Panc1 (cell line): ENCODE measurements at regions of chr2 and their contacts with region 1.

Region 1: GRCh38 chr2:236538242-236538641 is 31.4 kb upstream of the ACKR3 start:
- DNase-seq: no peak
- ATAC-seq: no peak
- H3K4me3 ChIP-seq: no peak overlapping the region
- H3K27ac ChIP-seq: no peak overlapping the region
- H3K4me1 ChIP-seq: no peaks in the 10 kb centered on the region
- H3K27me3 ChIP-seq: peaks cover 3% of the 10 kb centered on the region
- CTCF ChIP-seq: no peak

Region 2: GRCh38 chr2:236554627-236555282 is 16.5 kb after region 1 on chr2:
- CTCF ChIA-PET with region 1: no interaction called
- POLR2A ChIA-PET with region 1: no interaction called
- in situ Hi-C with region 1: no loop called
- intact Hi-C with region 1: loop called (anchors 2 kb)
- DNase-seq: no peak
- ATAC-seq: no peak
- H3K4me3 ChIP-seq: no peak overlapping the region
- H3K27ac ChIP-seq: no peak overlapping the region
- H3K4me1 ChIP-seq: no peaks in the 10 kb centered on the region
- H3K27me3 ChIP-seq: peaks cover 8% of the 10 kb centered on the region; the same call in 1 of the 2 replicates
- CTCF ChIP-seq: no peak